Pancreas (tissue), 10 donors: ENCODE measurements at regions of chr10 and their contacts with region 1.

Region 1: GRCh38 chr10:91251430-91252056 is 31.1 kb downstream of the PCGF5 start:
- DNase-seq: peak in 3 of 6 donors; percentile 13 to 60 (median 34)
- ATAC-seq: peak; percentile 69 to 93 (median 92)
- H3K4me3 ChIP-seq: no peak overlapping the region
- H3K27ac ChIP-seq: no peak overlapping the region
- H3K4me1 ChIP-seq: no peaks in the 10 kb centered on the region
- H3K27me3 ChIP-seq: no peaks in the 10 kb centered on the region
- CTCF ChIP-seq: peak; percentile 52 to 86 (median 82)

Region 2: GRCh38 chr10:90912174-90912573 is 339.4 kb before region 1 on chr10:
- intact Hi-C with region 1: loop called in 1 of 3 experiments (anchors 10 kb)
- DNase-seq: no peak
- ATAC-seq: no peak
- H3K4me3 ChIP-seq: no peak overlapping the region
- H3K27ac ChIP-seq: no peak overlapping the region
- H3K4me1 ChIP-seq: no peaks in the 10 kb centered on the region
- H3K27me3 ChIP-seq: no peaks in the 10 kb centered on the region
- CTCF ChIP-seq: no peak

Region 3: DNA sequence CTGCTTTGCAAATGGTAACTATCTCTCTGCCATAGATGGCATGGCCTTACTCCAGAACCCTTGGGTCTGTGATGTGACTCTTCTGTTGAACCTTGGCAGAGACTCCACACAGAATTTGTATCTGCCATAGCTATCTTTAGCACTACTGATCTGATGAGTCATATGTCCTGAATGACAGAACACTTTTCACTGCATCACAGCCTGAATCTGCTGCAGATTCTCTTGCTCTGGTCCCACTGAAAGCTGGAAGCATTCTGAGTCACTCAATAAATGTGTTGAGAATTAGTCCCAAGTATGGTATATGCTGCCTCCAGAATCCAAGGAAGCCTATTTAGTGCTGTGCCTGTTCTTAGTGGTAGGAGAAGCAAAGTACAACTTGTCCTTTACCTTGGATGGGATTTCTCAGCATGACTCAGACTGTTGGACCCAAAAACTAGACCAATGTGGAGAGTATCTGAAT is 291.2 kb before region 1 on chr10:
- intact Hi-C with region 1: no loop called
- DNase-seq: no peak
- ATAC-seq: no peak
- H3K4me3 ChIP-seq: no peak overlapping the region
- H3K27ac ChIP-seq: no peak overlapping the region
- H3K4me1 ChIP-seq: no peaks in the 10 kb centered on the region
- H3K27me3 ChIP-seq: no peaks in the 10 kb centered on the region
- CTCF ChIP-seq: no peak

Region 4: GRCh38 chr10:91006001-91006751 is 245.4 kb before region 1 on chr10:
- intact Hi-C with region 1: loop called in 2 of 3 experiments (anchors 10 kb)
- DNase-seq: peak in 4 of 6 donors; percentile 17 to 56 (median 28)
- ATAC-seq: peak; percentile 67 to 95 (median 88)
- H3K4me3 ChIP-seq: no peak overlapping the region
- H3K27ac ChIP-seq: no peak overlapping the region
- H3K4me1 ChIP-seq: no peaks in the 10 kb centered on the region
- H3K27me3 ChIP-seq: no peaks in the 10 kb centered on the region
- CTCF ChIP-seq: peak; percentile 81 to 86 (median 82)

Region 5: GRCh38 chr10:91349381-91349780 is 97.8 kb after region 1 on chr10:
- intact Hi-C with region 1: no loop called
- DNase-seq: peak in 1 of 6 donors; percentile 27
- ATAC-seq: peak; percentile 35 to 76 (median 64)
- H3K4me3 ChIP-seq: no peak overlapping the region
- H3K27ac ChIP-seq: peak overlapping the region in 2 of 4 donors; percentile 21 to 29
- H3K4me1 ChIP-seq: peaks cover 0 to 11% (median 8%) of the 10 kb centered on the region in 3 donors
- H3K27me3 ChIP-seq: no peaks in the 10 kb centered on the region
- CTCF ChIP-seq: no peak